WTC11 (cell line): ENCODE measurements at regions of chr15 and their contacts with region 1.

Region 1: GRCh38 chr15:76229266-76229665 is 82.0 kb downstream of the ETFA start:
- DNase-seq: no peak
- ATAC-seq: no peak
- H3K4me3 Mint-ChIP-seq: no peak overlapping the region
- H3K27ac Mint-ChIP-seq: no peak overlapping the region
- H3K4me1 Mint-ChIP-seq: peaks cover 5% of the 10 kb centered on the region
- H3K27me3 Mint-ChIP-seq: no peaks in the 10 kb centered on the region
- CTCF ChIP-seq: no peak

Region 2: DNA sequence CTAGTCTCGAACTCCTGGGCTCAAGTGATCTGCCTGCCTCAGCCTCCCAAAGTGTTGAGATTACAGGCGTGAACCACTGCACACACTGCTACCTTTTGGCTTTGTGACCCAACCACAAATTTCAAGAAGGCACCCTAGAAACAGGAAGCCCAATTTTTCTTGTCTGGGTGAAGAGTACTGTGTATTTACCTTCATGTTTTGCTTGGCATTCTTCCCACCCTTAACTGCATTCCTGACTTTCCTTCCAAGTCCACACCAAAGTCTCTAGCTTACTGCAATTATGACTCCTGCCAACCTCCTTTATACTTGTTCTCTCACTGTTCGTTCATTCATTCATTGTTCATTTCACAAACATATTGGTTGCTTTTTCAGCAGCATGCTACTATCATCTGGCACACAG is 12.2 kb before region 1 on chr15:
- CTCF ChIA-PET with region 1: no interaction called
- POLR2A ChIA-PET with region 1: no interaction called
- DNase-seq: no peak
- ATAC-seq: no peak
- H3K4me3 Mint-ChIP-seq: no peak overlapping the region
- H3K27ac Mint-ChIP-seq: peak overlapping the region; percentile 10
- H3K4me1 Mint-ChIP-seq: no peaks in the 10 kb centered on the region
- H3K27me3 Mint-ChIP-seq: no peaks in the 10 kb centered on the region
- CTCF ChIP-seq: no peak

Region 3: DNA sequence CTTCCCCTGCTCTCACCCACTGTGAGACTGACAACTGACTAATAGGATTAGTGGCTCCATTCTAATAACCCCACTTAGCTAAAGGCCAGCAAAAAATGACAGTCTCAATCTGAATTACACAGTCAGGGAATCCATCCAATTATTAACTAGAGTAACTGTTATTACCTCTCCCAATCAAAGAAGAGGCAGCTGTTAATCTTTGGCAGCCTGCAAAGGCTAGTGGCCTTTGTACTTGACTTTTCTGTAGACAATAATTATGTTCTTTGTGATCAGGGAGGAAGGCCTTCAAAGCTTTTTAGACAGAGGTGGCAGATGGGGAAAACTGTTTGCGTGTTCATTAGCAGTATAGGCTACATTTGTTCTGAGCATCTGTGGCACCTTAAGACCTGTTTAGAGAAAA is 285.0 kb after region 1 on chr15:
- CTCF ChIA-PET with region 1: no interaction called
- POLR2A ChIA-PET with region 1: interaction called, 10 read pairs
- DNase-seq: no peak
- ATAC-seq: no peak
- H3K4me3 Mint-ChIP-seq: no peak overlapping the region
- H3K27ac Mint-ChIP-seq: no peak overlapping the region
- H3K4me1 Mint-ChIP-seq: peaks cover 19% of the 10 kb centered on the region
- H3K27me3 Mint-ChIP-seq: no peaks in the 10 kb centered on the region
- CTCF ChIP-seq: no peak